Activated CD4-positive, alpha-beta memory T cell treated with anti-CD3 and anti-CD28 coated beads for 36 hours (primary cell): ENCODE measurements at regions of chr1 and their contacts with region 1.

Region 1: GRCh38 chr1:206766251-206766856 is 4.2 kb upstream of the IL19 start:
- DNase-seq: peak; percentile 84
- H3K4me3 Mint-ChIP-seq: peak overlapping the region; percentile 44
- H3K27ac Mint-ChIP-seq: peak overlapping the region; percentile 68
- H3K4me1 Mint-ChIP-seq: peaks cover 69% of the 10 kb centered on the region
- H3K27me3 Mint-ChIP-seq: peaks cover 6% of the 10 kb centered on the region

Region 2: DNA sequence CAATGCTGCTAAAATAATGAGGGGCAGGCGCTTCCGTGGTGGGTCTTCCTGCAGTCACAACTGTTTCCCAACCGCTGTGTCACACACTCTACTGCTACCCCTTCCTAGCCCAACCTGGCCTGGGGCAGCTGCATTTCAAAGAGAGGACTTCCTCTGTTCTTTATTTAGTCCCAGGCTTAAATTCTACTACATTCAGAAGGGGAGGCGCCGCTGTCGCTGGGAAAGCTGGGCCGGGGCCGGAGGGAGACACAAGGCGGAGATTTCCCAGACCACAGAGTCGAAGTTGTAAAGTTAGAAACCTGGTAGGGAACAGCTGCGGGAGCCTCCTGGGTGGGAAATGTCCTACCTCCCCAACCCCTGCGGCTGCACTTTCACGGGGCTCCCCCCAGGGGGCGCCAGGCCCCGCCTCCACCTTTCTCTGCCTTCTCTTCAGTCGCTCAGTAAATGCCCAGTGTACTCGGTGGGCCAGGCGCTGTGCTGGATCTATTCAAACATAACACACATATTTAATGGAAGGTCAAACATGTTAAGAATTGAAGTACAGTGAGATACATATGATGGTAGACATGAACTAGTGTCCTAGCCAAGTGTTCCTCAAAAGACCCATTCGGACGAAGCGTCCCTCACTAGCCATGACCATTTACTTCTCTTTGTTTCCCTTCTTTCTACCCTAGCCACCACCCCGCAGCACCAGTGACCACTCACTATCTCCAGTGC is 107.9 kb before region 1 on chr1:
- CTCF ChIA-PET with region 1: no interaction called
- POLR2A ChIA-PET with region 1: no interaction called
- intact Hi-C with region 1: no loop called
- DNase-seq: peak; percentile 74
- H3K4me3 Mint-ChIP-seq: no peak overlapping the region
- H3K27ac Mint-ChIP-seq: no peak overlapping the region
- H3K4me1 Mint-ChIP-seq: peaks cover 20% of the 10 kb centered on the region
- H3K27me3 Mint-ChIP-seq: peaks cover 18% of the 10 kb centered on the region

Region 3: DNA sequence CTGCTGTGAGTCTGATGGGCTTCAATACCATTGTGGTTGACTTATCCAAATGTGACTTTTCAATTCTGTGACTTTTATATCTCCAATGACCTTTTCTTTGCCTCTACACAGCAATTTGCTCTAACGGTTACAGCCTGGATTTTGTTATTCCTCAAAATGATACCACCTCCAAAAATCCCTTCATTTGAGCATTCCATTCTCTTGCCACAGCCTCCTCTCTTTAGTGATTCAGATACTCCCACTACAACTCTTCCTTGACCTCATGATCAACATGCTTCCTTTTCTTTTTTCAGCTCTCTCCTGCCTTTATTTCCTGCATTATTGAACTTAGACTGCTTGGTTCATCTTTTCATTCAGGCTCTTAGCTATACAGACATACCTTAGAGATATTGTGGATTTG is 12.3 kb before region 1 on chr1:
- CTCF ChIA-PET with region 1: interaction called, 8 read pairs
- POLR2A ChIA-PET with region 1: interaction called, 4 read pairs
- intact Hi-C with region 1: loop called (anchors 2 kb)
- DNase-seq: no peak
- H3K4me3 Mint-ChIP-seq: no peak overlapping the region
- H3K27ac Mint-ChIP-seq: no peak overlapping the region
- H3K4me1 Mint-ChIP-seq: peaks cover 28% of the 10 kb centered on the region
- H3K27me3 Mint-ChIP-seq: no peaks in the 10 kb centered on the region

Region 4: GRCh38 chr1:206967096-206967849 is 200.9 kb after region 1 on chr1:
- CTCF ChIA-PET with region 1: no interaction called
- POLR2A ChIA-PET with region 1: no interaction called
- intact Hi-C with region 1: no loop called
- DNase-seq: no peak
- H3K4me3 Mint-ChIP-seq: no peak overlapping the region
- H3K27ac Mint-ChIP-seq: no peak overlapping the region
- H3K4me1 Mint-ChIP-seq: peaks cover 27% of the 10 kb centered on the region
- H3K27me3 Mint-ChIP-seq: peaks cover 7% of the 10 kb centered on the region